ENCODE measurements at regions of chr20 and their contacts with region 1.

Region 1: DNA sequence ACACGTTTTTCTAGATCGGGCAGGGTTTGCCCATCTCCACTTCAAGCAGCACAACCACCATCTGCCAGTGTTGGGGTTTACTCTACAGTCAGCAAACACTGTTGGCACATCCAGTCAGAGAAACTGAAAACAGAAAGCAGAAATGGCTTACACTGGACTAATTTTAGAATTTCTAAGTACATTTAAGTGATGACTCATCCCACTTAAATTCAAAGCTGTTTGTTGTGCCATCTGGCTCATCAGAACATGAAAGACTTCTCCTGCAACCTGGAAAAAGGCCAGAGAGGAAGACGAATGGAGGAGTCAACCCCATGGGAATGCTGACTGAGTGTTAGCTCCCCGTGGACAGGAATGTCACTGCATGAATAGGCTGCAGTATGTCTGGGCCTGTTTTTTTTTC is 21.8 kb downstream of the FAM209B start:
- DNase-seq: peak; percentile 99
- H3K27ac ChIP-seq: no peak overlapping the region
- CTCF ChIP-seq: peak; percentile 47; the same call in 1 of the 2 replicates

Region 2: GRCh38 chr20:56328853-56329252 is 226.0 kb before region 1 on chr20:
- CTCF ChIA-PET with region 1: no interaction called
- POLR2A ChIA-PET with region 1: no interaction called
- DNase-seq: peak; percentile 49
- H3K27ac ChIP-seq: no peak overlapping the region
- CTCF ChIP-seq: no peak

Region 3: DNA sequence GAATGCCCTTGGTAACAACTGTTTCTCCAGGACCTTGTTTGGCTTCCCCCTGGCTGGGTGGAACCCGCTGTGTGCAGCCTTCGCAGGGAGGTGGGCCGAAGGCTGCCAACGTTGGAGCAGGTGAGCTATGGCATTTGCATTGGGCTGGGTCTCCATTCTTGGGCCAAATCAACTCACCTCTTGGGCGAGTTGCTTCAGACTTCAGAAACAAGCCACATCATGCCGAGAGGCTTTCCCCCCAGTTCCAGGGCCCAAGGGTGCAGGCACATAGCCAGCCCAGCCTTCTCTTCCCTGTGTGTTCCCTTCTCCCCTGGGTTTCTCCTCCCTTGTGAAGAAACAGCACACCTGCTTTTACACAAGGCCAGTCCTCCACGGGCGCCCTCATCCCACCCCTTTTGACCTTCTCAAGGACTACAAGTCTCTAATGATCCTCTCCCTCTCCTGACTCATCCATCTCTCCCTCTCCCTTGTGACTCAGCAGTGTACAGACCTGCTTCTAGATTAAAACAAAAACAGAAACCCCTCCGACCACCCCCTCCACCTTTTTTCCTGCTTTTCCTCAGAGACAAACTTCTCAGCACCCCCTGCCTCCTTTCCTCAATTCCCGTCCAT is 19.8 kb after region 1 on chr20:
- CTCF ChIA-PET with region 1: interaction called, 52 read pairs
- POLR2A ChIA-PET with region 1: no interaction called
- DNase-seq: peak; percentile 87
- H3K27ac ChIP-seq: peak overlapping the region; percentile 89
- CTCF ChIP-seq: no peak

Region 4: DNA sequence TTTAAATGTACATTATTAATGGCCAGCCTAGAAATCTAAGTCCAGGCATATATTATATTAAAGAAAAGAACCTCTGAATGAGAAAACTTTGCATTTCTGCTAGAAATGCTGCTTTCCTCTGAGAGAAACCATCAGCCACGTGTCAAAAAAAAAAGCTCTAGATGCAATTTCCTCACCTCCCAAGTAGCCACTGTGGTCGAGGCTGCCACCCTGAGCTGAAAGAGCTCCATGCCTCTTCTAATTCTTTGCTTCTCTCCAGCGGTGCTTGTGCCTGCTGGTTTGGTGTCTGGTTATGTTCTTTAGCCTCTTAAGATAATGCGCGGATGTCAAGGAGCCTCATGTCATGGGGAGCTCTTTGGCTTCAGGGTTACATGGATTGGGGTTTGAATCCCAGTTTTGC is 390.2 kb after region 1 on chr20:
- CTCF ChIA-PET with region 1: interaction called, 15 read pairs
- POLR2A ChIA-PET with region 1: no interaction called
- DNase-seq: peak; percentile 41
- H3K27ac ChIP-seq: no peak overlapping the region
- CTCF ChIP-seq: no peak

Region 5: GRCh38 chr20:56995576-56996075 is 440.8 kb after region 1 on chr20:
- CTCF ChIA-PET with region 1: interaction called, 13 read pairs
- POLR2A ChIA-PET with region 1: no interaction called
- DNase-seq: peak; percentile 80
- H3K27ac ChIP-seq: no peak overlapping the region
- CTCF ChIP-seq: peak; percentile 83

Measured in RWPE1 (cell line).